ENCODE measurements at regions of chrX and their contacts with region 1.

Region 1: GRCh38 chrX:14039344-14039743 is 9.7 kb upstream of the GEMIN8 start:
- DNase-seq: peak in 3 of 10 donors; percentile 42 to 61 (median 48)
- H3K4me3 ChIP-seq: no peak overlapping the region
- H3K27ac ChIP-seq: no peak overlapping the region
- H3K27me3 ChIP-seq: peaks cover 0 to 58% (median 11%) of the 10 kb centered on the region in 45 donors
- CTCF ChIP-seq: peak; percentile 24 to 93 (median 79)

Region 2: GRCh38 chrX:13506574-13506973 is 532.8 kb before region 1 on chrX:
- intact Hi-C with region 1: loop called in 1 of 2 experiments (anchors 5 kb)
- DNase-seq: peak in 1 of 10 donors; percentile 7
- H3K4me3 ChIP-seq: no peak overlapping the region
- H3K27ac ChIP-seq: no peak overlapping the region
- H3K27me3 ChIP-seq: peaks cover 0 to 65% (median 8%) of the 10 kb centered on the region in 45 donors
- CTCF ChIP-seq: peak; percentile 55 to 90 (median 78)

Region 3: DNA sequence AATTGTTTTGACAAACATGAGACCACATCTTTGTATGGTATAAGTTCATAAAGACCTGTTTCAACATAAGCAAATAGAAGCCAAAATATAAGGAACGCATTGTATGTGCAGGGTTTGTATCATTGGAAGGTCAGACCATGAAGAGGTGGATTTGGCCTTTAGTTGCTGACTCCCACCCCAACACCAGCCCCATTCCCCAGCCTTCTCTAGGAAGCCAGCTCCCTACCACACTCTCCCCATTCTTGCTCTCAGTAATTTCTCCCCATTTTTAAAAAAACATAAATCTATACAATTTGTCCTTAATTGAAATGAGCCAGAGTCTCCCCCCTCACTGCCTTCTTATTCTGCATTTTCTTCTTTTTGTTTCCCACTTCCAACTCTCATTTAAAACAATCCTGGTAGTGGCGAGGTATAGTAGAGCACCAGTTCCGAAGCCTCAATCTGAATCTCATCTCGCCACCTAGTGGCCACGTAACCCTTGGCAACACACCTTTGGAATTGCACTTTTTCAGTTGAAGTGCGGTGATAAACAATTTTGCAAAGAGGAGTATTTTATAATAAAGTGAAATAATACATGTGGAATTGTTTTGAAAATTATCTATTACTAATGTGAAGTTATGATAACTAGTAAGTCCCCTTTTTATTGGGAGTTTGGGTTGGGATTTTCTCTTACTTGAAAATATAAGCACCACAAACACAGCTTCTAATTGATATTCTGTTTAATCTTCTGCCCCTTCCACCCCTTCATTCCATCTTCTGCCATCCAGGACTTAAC is 1103.9 kb after region 1 on chrX:
- intact Hi-C with region 1: loop called in 1 of 2 experiments (anchors 5 kb)
- DNase-seq: peak in 8 of 10 donors; percentile 21 to 55 (median 40)
- H3K4me3 ChIP-seq: no peak overlapping the region
- H3K27ac ChIP-seq: no peak overlapping the region
- H3K27me3 ChIP-seq: peaks cover 0 to 72% (median 20%) of the 10 kb centered on the region in 45 donors
- CTCF ChIP-seq: peak; percentile 49 to 82 (median 68)

Region 4: DNA sequence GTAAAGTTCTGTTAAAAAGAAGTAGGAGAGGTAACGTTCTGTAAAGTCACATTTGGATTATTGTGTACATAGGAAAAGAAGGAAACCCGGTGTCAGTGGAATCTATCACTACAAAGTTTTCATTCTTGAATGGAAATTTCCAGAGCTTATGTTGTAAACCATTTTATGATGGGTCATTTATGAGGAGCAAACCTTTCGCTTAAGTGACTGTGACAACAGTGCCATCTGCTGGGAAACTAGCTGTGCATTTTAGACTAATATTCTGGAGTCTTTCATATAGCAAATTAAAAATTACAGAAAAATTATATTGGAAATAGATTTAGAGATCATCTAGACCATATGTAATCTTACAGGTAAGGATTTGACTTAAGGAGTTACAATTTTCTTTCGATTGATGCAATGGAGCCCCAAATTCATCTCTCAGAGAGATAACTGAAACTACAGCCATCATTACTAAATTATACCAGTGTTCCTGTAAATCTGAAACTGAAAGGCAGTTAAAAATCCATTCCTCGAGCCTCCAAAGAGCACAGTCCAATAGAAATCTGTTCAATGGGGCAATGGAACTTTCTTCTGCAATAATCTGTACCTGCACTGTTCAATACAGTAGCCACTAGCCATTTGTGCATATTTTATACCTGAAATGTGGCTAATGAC is 1203.7 kb after region 1 on chrX:
- intact Hi-C with region 1: loop called (anchors 2 to 10 kb)
- DNase-seq: peak in 3 of 10 donors; percentile 31 to 59 (median 33)
- H3K4me3 ChIP-seq: no peak overlapping the region
- H3K27ac ChIP-seq: no peak overlapping the region
- H3K27me3 ChIP-seq: peaks cover 0 to 74% (median 15%) of the 10 kb centered on the region in 45 donors
- CTCF ChIP-seq: peak; percentile 18 to 85 (median 63)